Mammary epithelial cell (primary cell): ENCODE measurements at regions of chr5 and their contacts with region 1.

Region 1: DNA sequence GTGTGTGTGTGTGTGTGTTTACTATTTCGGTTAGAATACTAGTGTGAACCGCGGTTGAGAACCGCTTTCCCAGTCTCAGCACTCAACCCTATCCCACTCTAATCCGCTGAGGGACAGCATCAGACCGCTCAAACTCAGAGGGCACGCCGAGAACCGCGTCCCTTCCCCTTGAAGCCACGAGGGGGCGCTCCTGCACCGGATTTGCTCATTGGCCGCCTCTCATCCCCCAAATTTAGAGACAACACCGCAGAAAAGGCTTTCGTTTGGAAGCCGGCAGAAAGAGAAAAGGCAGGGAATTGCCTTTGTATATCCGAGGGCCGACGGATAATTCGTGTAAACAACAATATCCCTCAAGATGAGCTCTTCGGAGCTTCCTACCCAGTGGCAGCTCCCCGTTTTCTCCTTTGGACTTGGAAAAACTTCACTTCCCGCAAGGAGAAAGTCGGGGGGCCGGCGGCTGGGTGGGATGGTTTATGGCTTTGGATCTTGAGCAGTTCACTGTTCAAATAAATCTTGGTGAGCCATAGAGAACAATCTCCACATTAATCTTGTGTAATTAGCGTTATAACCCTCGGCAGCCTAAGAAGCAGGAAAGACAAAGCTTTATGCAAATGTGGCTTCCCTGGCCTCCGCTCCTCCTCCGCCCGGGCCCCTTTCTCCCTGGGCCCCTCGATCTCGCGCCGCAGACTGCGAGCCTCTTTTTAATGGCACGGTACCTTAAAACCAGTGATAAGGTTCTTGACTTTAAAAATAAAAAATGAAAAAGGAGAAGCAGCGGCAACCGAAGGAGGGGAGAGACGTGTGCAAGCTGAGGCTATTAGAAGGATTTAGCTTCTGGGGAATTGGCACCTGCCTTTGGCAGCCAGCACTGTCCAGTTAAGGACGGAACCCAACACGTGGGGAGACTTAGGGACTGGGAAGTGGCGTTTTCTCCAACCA is 296.8 kb downstream of the PARP8 start:
- DNase-seq: peak; percentile 36
- H3K4me3 ChIP-seq: peak overlapping the region; percentile 37 to 48 (median 38)
- H3K27ac ChIP-seq: no peak overlapping the region
- H3K4me1 ChIP-seq: peaks cover 10% of the 10 kb centered on the region
- H3K27me3 ChIP-seq: peaks cover 50% of the 10 kb centered on the region
- CTCF ChIP-seq: peak; percentile 97 to 98

Region 2: DNA sequence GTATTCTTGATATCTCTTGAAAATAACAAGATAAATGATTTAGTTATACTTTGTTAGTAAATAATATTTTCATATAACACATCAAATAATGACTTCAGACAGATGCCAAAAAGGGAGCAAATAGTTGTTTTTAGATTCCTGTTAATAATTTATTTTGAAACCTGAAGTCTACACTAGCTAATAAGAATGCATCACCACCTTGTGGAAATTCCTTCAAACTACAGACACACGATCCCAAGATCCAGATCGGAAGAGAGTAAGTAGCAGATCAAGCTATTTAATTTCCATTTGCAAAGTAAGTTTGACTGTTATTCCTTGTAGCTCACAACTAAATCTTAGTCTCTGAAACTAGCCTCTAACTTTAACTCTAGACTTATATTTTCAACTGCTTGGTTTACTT is 384.5 kb after region 1 on chr5:
- CTCF ChIA-PET with region 1: interaction called, 4 read pairs
- dilution Hi-C with region 1: no loop called
- in situ Hi-C with region 1: no loop called
- intact Hi-C with region 1: loop called (anchors 1 kb)
- DNase-seq: no peak
- H3K4me3 ChIP-seq: no peak overlapping the region
- H3K27ac ChIP-seq: no peak overlapping the region
- H3K4me1 ChIP-seq: no peaks in the 10 kb centered on the region
- H3K27me3 ChIP-seq: no peaks in the 10 kb centered on the region
- CTCF ChIP-seq: peak; percentile 25 to 47

Region 3: GRCh38 chr5:51416149-51416548 is 452.9 kb after region 1 on chr5:
- CTCF ChIA-PET with region 1: no interaction called
- dilution Hi-C with region 1: no loop called
- in situ Hi-C with region 1: no loop called
- intact Hi-C with region 1: loop called (anchors 1 kb)
- DNase-seq: no peak
- H3K4me3 ChIP-seq: no peak overlapping the region
- H3K27ac ChIP-seq: no peak overlapping the region
- H3K4me1 ChIP-seq: no peaks in the 10 kb centered on the region
- H3K27me3 ChIP-seq: no peaks in the 10 kb centered on the region
- CTCF ChIP-seq: peak in 1 of 2 donors; percentile 7

Region 4: GRCh38 chr5:51846015-51846414 is 882.8 kb after region 1 on chr5:
- CTCF ChIA-PET with region 1: no interaction called
- dilution Hi-C with region 1: no loop called
- in situ Hi-C with region 1: no loop called
- intact Hi-C with region 1: loop called (anchors 1 kb)
- DNase-seq: peak; percentile 33
- H3K4me3 ChIP-seq: no peak overlapping the region
- H3K27ac ChIP-seq: no peak overlapping the region
- H3K4me1 ChIP-seq: no peaks in the 10 kb centered on the region
- H3K27me3 ChIP-seq: no peaks in the 10 kb centered on the region
- CTCF ChIP-seq: no peak

Region 5: GRCh38 chr5:52007230-52007858 is 1044.1 kb after region 1 on chr5:
- CTCF ChIA-PET with region 1: no interaction called
- dilution Hi-C with region 1: no loop called
- in situ Hi-C with region 1: loop called (anchors 10 to 25 kb)
- intact Hi-C with region 1: loop called (anchors 1 kb)
- DNase-seq: peak; percentile 33
- H3K4me3 ChIP-seq: no peak overlapping the region
- H3K27ac ChIP-seq: no peak overlapping the region
- H3K4me1 ChIP-seq: no peaks in the 10 kb centered on the region
- H3K27me3 ChIP-seq: peaks cover 3% of the 10 kb centered on the region
- CTCF ChIP-seq: peak; percentile 83 to 87

Region 6: GRCh38 chr5:52657247-52657645 is 1694.0 kb after region 1 on chr5:
- CTCF ChIA-PET with region 1: no interaction called
- dilution Hi-C with region 1: no loop called
- in situ Hi-C with region 1: loop called (anchors 25 kb)
- intact Hi-C with region 1: loop called (anchors 1 kb)
- DNase-seq: peak; percentile 23
- H3K4me3 ChIP-seq: no peak overlapping the region
- H3K27ac ChIP-seq: no peak overlapping the region
- H3K4me1 ChIP-seq: no peaks in the 10 kb centered on the region
- H3K27me3 ChIP-seq: no peaks in the 10 kb centered on the region
- CTCF ChIP-seq: peak; percentile 41 to 45